Activated CD4-positive, alpha-beta T cell treated with anti-CD3 and anti-CD28 coated beads for 36 hours (primary cell): ENCODE measurements at regions of chrX and their contacts with region 1.

Region 1: DNA sequence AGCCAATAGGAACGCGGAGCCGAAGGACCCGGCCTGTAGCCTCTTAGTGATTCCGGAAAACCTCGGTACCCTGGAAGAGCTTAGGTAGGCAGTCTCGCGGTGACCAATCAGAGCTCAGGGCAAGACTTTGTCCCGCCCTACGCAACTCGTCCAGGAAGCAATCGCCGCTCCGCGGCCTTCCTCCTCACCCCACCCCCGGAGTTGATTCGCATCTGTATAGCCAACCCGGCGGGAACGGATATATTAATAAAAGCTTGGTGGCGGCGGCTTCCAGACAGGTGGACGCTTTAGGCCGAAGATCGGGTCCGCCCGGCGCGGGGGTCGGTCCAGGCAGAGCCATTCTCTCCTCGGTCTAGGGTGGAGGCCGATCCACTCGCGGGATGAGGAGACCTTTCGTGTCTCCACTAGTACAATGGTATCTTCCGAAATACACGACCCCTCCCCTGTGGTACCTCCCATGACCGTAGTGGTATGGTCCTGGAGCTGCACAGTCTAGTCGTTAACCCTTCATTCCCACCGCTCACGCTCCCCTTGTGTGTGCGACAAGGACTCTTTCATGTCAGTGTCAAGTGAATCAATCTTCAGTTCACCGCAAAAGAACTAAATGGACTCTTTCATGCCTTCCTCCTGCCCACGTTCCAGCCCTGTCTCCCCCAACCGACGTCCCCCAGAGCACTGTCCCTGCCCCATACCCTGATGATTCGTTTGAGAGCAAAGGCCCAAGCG is 24.2 kb upstream of the GLOD5 start:
- DNase-seq: peak; percentile 92
- ATAC-seq: peak; percentile 96
- H3K4me3 Mint-ChIP-seq: peak overlapping the region; percentile 97
- H3K27ac Mint-ChIP-seq: peak overlapping the region; percentile 99
- H3K4me1 Mint-ChIP-seq: peaks cover 20% of the 10 kb centered on the region
- H3K27me3 Mint-ChIP-seq: no peaks in the 10 kb centered on the region

Region 2: GRCh38 chrX:48676106-48676892 is 61.1 kb before region 1 on chrX:
- CTCF ChIA-PET with region 1: no interaction called
- POLR2A ChIA-PET with region 1: no interaction called
- intact Hi-C with region 1: loop called (anchors 1 to 5 kb)
- DNase-seq: peak; percentile 92
- ATAC-seq: peak; percentile 95
- H3K4me3 Mint-ChIP-seq: peak overlapping the region; percentile 90
- H3K27ac Mint-ChIP-seq: peak overlapping the region; percentile 91
- H3K4me1 Mint-ChIP-seq: peaks cover 19% of the 10 kb centered on the region
- H3K27me3 Mint-ChIP-seq: no peaks in the 10 kb centered on the region

Region 3: GRCh38 chrX:48714573-48714972 is 22.8 kb before region 1 on chrX:
- CTCF ChIA-PET with region 1: no interaction called
- POLR2A ChIA-PET with region 1: no interaction called
- intact Hi-C with region 1: loop called (anchors 1 to 2 kb)
- DNase-seq: no peak
- ATAC-seq: peak; percentile 16
- H3K4me3 Mint-ChIP-seq: peak overlapping the region; percentile 4
- H3K27ac Mint-ChIP-seq: peak overlapping the region; percentile 86
- H3K4me1 Mint-ChIP-seq: peaks cover 78% of the 10 kb centered on the region
- H3K27me3 Mint-ChIP-seq: no peaks in the 10 kb centered on the region

Region 4: GRCh38 chrX:48761674-48762471 is 24.5 kb after region 1 on chrX and contains the start of gene GLOD5:
- CTCF ChIA-PET with region 1: no interaction called
- POLR2A ChIA-PET with region 1: interaction called, 10 read pairs
- intact Hi-C with region 1: no loop called
- DNase-seq: peak; percentile 43
- ATAC-seq: peak; percentile 83
- H3K4me3 Mint-ChIP-seq: no peak within 1 kb of the TSS
- H3K27ac Mint-ChIP-seq: no peak within 1 kb of the TSS
- H3K4me1 Mint-ChIP-seq: peaks cover 3% of the 10 kb centered on the region
- H3K27me3 Mint-ChIP-seq: no peaks in the 10 kb centered on the region
- total RNA-seq, gene GLOD5: not detected

Region 5: DNA sequence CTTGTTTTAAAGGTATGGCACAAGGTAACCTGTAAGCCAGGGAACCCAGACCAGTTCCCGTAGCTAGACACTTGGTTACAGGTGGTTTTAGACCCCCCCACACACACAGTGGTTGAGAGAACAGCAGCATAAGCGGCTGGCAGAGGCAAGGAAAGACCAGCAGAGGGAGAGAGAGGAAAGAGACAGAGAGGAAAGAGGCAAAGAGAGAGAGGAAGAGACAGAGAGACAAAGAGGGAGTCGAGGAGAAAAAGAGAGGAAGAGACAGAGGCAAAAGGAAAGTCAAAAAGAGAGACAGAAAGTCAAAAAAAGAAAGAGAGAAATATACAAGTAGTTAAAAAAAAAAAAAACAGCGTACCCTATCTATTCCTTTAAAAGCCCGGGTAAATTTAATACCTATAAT is 117.5 kb after region 1 on chrX:
- CTCF ChIA-PET with region 1: no interaction called
- POLR2A ChIA-PET with region 1: no interaction called
- intact Hi-C with region 1: no loop called
- DNase-seq: peak; percentile 23
- ATAC-seq: no peak
- H3K4me3 Mint-ChIP-seq: no peak overlapping the region
- H3K27ac Mint-ChIP-seq: no peak overlapping the region
- H3K4me1 Mint-ChIP-seq: peaks cover 2% of the 10 kb centered on the region
- H3K27me3 Mint-ChIP-seq: peaks cover 4% of the 10 kb centered on the region

Region 6: GRCh38 chrX:48937054-48937907 is 199.9 kb after region 1 on chrX:
- CTCF ChIA-PET with region 1: no interaction called
- POLR2A ChIA-PET with region 1: no interaction called
- intact Hi-C with region 1: loop called in 1 of 2 experiments (anchors 5 kb)
- DNase-seq: peak; percentile 93
- ATAC-seq: peak; percentile 61
- H3K4me3 Mint-ChIP-seq: peak overlapping the region; percentile 64
- H3K27ac Mint-ChIP-seq: peak overlapping the region; percentile 96
- H3K4me1 Mint-ChIP-seq: peaks cover 81% of the 10 kb centered on the region
- H3K27me3 Mint-ChIP-seq: no peaks in the 10 kb centered on the region

Region 7: GRCh38 chrX:49002091-49002935 is 264.9 kb after region 1 on chrX and contains the start of gene GRIPAP1:
- CTCF ChIA-PET with region 1: no interaction called
- POLR2A ChIA-PET with region 1: no interaction called
- intact Hi-C with region 1: loop called in 1 of 2 experiments (anchors 1 kb)
- DNase-seq: peak; percentile 87
- ATAC-seq: peak; percentile 82
- H3K4me3 Mint-ChIP-seq: peak within 1 kb of the TSS; percentile 97
- H3K27ac Mint-ChIP-seq: peak within 1 kb of the TSS; percentile 98
- H3K4me1 Mint-ChIP-seq: peaks cover 34% of the 10 kb centered on the region
- H3K27me3 Mint-ChIP-seq: no peaks in the 10 kb centered on the region
- total RNA-seq, gene GRIPAP1: 57.8 to 63.3 TPM

Region 8: GRCh38 chrX:49043220-49043986 is 306.0 kb after region 1 on chrX and contains the start of gene TFE3:
- CTCF ChIA-PET with region 1: no interaction called
- POLR2A ChIA-PET with region 1: no interaction called
- intact Hi-C with region 1: no loop called
- DNase-seq: peak; percentile 97
- ATAC-seq: peak; percentile 91
- H3K4me3 Mint-ChIP-seq: peak within 1 kb of the TSS; percentile 93
- H3K27ac Mint-ChIP-seq: peak within 1 kb of the TSS; percentile 94
- H3K4me1 Mint-ChIP-seq: peaks cover 41% of the 10 kb centered on the region
- H3K27me3 Mint-ChIP-seq: no peaks in the 10 kb centered on the region
- total RNA-seq, gene TFE3: 27.1 to 27.5 TPM